HCT116 (cell line): ENCODE measurements at regions of chr12 and their contacts with region 1.

Region 1: DNA sequence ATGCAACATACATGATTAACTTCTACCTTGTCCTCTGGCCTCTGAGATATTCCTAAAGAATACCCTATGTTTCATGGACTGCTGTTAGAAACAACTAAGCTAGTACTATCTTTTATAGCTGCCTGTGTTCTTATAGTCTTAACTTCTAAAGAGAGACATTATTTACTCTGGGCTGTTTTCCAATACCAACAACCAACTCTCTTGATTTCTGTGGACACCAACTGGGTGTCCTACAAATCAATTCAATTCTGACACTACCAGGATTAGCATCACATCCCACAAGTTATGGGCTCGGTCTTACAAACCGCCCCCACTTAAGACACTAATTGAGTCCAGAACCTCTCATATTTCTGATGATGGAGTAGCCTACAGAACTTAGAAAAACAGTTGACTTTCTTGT is 8.3 kb downstream of the XPOT start:
- DNase-seq: no peak
- ATAC-seq: no peak
- H3K4me3 ChIP-seq: no peak overlapping the region
- H3K27ac ChIP-seq: no peak overlapping the region
- H3K4me1 ChIP-seq: 0 out of 4 replicates have a peak, but pooled peaks cover 0 to 4% of the 10 kb centered on the region in 2 experiments
- H3K27me3 ChIP-seq: no peaks in the 10 kb centered on the region
- CTCF ChIP-seq: no peak
- POLR2A ChIP-seq: no peak
- RAD21 ChIP-seq: no peak

Region 2: DNA sequence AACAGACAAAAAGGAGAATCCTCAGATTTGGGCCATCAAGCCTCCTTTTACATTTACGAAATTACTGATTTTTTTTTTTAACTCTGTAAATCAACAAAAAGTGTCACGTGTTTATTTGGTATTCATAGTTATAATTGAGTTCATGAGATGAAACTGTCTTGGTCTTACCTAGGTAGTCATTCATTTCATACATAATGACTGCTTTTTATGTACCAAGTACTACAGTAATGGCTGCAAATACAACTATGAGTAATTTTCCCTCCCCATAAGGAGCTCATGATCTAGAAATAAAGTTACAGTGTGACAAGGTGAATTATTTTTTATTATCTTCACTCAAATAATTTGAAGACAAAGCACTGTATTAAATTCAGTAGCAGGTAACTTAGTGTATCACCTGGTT is 33.0 kb after region 1 on chr12:
- CTCF ChIA-PET with region 1: no interaction called
- POLR2A ChIA-PET with region 1: no interaction called
- RAD21 ChIA-PET with region 1: no interaction called
- intact Hi-C with region 1: loop called (anchors 5 kb)
- DNase-seq: no peak
- ATAC-seq: no peak
- H3K4me3 ChIP-seq: no peak overlapping the region
- H3K27ac ChIP-seq: no peak overlapping the region
- H3K4me1 ChIP-seq: peaks cover 0 to 4% of the 10 kb centered on the region in 2 experiments; a peak in 3 of 4 replicates
- H3K27me3 ChIP-seq: no peaks in the 10 kb centered on the region
- CTCF ChIP-seq: no peak
- POLR2A ChIP-seq: no peak
- RAD21 ChIP-seq: no peak